CD8-positive, alpha-beta T cell (primary cell): ENCODE measurements at regions of chr13 and their contacts with region 1.

Region 1: DNA sequence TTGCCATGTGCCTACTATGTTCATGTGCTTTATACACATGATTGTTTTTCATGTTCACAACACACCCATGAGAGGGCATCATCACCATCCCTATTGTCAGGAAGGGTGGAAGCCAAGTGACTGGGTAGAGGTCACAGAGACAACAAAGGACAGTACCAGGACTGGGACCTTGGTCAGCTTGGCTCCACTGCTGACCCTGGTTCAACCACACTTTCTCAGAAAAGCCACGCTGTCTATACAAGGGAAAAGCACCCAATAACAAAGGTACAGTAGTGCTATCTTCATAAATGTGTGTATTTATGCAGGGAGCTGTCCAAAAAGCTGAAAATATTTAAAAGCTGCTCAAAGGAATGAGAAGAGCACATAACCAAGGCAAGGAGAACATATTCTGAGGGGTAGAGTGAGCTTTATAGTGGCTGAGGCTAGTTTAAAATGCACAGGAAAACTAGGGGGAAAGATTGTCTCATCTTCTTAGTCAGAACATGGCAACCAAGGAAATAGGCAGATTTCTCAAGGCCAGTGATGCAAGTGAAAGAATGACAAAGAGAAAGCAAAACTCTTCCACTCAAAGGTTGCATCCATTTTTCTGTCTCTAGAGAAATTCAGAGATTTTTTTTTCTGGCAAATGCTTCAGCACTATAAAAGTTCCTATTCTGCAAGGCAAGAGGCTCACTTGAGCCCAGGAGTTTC is 415.0 kb downstream of the FOXO1 start:
- DNase-seq: peak in 1 of 9 experiments; percentile 20
- ATAC-seq: no peak
- H3K4me3 ChIP-seq: no peak overlapping the region
- H3K4me3 Mint-ChIP-seq: no peak overlapping the region
- H3K27ac ChIP-seq: no peak overlapping the region
- H3K27ac Mint-ChIP-seq: no peak overlapping the region
- H3K4me1 ChIP-seq: peaks cover 14% of the 10 kb centered on the region
- H3K4me1 Mint-ChIP-seq: peaks cover 17% of the 10 kb centered on the region
- H3K27me3 ChIP-seq: no peaks in the 10 kb centered on the region
- H3K27me3 Mint-ChIP-seq: no peaks in the 10 kb centered on the region
- CTCF ChIP-seq: no peak

Region 2: DNA sequence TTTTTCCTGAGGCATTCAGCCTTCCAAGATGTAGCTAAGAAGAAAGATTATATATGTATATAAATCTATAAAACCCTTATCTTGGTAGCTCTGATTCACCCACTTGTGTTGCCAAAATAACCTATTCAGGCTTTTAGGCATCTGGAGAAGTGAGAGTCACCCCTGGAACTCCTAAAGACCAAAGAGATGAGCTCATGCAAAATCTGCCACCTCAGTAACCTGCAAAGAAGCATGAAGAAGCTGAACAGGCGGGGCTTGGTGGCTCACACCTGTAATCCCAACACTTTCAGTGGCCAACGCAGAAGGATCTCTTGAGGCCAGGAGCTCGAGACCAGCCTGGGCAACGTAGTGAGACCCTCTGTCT is 21.3 kb after region 1 on chr13:
- CTCF ChIA-PET with region 1: no interaction called
- POLR2A ChIA-PET with region 1: no interaction called
- intact Hi-C with region 1: no loop called
- DNase-seq: no peak
- ATAC-seq: no peak
- H3K4me3 ChIP-seq: no peak overlapping the region
- H3K4me3 Mint-ChIP-seq: no peak overlapping the region
- H3K27ac ChIP-seq: no peak overlapping the region
- H3K27ac Mint-ChIP-seq: no peak overlapping the region
- H3K4me1 ChIP-seq: peaks cover 22% of the 10 kb centered on the region
- H3K4me1 Mint-ChIP-seq: peaks cover 30% of the 10 kb centered on the region
- H3K27me3 ChIP-seq: no peaks in the 10 kb centered on the region
- H3K27me3 Mint-ChIP-seq: no peaks in the 10 kb centered on the region
- CTCF ChIP-seq: no peak

Region 3: GRCh38 chr13:40318366-40318765 is 66.9 kb after region 1 on chr13:
- CTCF ChIA-PET with region 1: no interaction called
- POLR2A ChIA-PET with region 1: no interaction called
- intact Hi-C with region 1: loop called in 1 of 2 experiments (anchors 10 kb)
- DNase-seq: peak in 2 of 9 experiments; percentile 11 to 14
- ATAC-seq: no peak
- H3K4me3 ChIP-seq: no peak overlapping the region
- H3K4me3 Mint-ChIP-seq: no peak overlapping the region
- H3K27ac ChIP-seq: no peak overlapping the region
- H3K27ac Mint-ChIP-seq: no peak overlapping the region
- H3K4me1 ChIP-seq: peaks cover 25% of the 10 kb centered on the region
- H3K4me1 Mint-ChIP-seq: peaks cover 55% of the 10 kb centered on the region
- H3K27me3 ChIP-seq: no peaks in the 10 kb centered on the region
- H3K27me3 Mint-ChIP-seq: no peaks in the 10 kb centered on the region
- CTCF ChIP-seq: no peak

Region 4: DNA sequence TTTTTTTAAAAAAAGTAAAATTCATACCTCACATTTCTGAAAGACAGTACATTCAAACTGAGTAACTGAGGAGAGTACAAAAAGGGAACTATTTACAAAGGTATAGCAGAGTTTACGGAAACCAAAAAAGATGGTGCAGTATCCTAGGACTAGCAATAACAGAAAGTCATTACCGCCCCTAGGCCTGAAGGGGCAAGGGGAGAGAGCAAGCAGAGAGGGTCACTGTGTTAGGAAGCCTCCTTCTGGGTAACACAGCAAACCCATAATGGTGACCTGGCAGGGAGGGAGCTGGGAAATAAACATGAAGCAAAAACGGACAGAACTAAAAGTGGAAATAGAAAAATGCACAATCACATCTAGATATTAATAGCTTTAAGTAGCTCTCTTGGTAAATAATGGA is 1701.3 kb after region 1 on chr13:
- CTCF ChIA-PET with region 1: no interaction called
- POLR2A ChIA-PET with region 1: no interaction called
- intact Hi-C with region 1: loop called in 1 of 2 experiments (anchors 5 kb)
- DNase-seq: no peak
- ATAC-seq: no peak
- H3K4me3 ChIP-seq: no peak overlapping the region
- H3K4me3 Mint-ChIP-seq: no peak overlapping the region
- H3K27ac ChIP-seq: no peak overlapping the region
- H3K27ac Mint-ChIP-seq: no peak overlapping the region
- H3K4me1 ChIP-seq: peaks cover 4% of the 10 kb centered on the region
- H3K4me1 Mint-ChIP-seq: peaks cover 41% of the 10 kb centered on the region
- H3K27me3 ChIP-seq: no peaks in the 10 kb centered on the region
- H3K27me3 Mint-ChIP-seq: no peaks in the 10 kb centered on the region
- CTCF ChIP-seq: no peak